Left cardiac atrium (tissue), 4 donors: ENCODE measurements at regions of chr9 and their contacts with region 1.

Region 1: DNA sequence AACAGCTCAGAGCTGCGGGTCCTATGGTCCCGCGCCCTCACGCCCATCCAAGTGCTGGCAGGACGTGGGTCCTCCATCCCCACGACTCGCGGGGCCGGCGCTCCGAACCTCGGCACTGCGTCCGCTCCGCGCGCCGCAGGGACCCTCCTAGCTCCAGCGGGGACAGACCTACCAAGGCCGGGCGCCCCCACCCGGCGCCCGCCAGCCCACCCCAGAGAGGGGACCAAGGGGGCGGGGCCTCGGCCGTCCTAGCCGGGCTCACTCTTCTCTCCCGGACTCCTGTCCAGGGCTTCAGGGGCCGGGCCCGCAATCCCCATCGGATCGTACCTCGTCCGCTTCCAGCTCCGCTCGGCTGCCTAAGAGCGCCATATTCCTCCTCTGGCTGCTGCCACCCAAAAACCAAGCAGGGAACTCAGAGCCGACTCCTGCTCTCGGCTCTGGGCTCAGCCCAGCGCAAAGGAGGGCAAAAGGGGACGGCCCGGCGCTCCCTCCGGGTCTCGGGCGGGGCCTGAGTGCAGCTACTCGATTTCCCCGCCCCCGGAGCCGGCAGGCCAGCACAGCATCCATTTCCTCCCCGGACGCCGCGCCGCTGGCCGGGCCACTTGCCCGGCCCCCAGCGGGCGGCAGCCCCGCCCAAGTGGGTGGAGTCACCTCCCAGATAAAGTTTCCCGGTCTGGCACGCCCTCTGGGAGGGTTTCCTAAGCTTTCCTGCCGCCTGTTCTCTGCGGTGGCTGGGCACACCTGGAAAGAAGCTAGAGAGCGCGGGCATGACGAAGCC is at the start of gene TTC39B:
- DNase-seq: peak; percentile 96
- ATAC-seq: peak; percentile 97 to 99
- total RNA-seq, gene TTC39B: 2.9 to 4.8 TPM

Region 2: DNA sequence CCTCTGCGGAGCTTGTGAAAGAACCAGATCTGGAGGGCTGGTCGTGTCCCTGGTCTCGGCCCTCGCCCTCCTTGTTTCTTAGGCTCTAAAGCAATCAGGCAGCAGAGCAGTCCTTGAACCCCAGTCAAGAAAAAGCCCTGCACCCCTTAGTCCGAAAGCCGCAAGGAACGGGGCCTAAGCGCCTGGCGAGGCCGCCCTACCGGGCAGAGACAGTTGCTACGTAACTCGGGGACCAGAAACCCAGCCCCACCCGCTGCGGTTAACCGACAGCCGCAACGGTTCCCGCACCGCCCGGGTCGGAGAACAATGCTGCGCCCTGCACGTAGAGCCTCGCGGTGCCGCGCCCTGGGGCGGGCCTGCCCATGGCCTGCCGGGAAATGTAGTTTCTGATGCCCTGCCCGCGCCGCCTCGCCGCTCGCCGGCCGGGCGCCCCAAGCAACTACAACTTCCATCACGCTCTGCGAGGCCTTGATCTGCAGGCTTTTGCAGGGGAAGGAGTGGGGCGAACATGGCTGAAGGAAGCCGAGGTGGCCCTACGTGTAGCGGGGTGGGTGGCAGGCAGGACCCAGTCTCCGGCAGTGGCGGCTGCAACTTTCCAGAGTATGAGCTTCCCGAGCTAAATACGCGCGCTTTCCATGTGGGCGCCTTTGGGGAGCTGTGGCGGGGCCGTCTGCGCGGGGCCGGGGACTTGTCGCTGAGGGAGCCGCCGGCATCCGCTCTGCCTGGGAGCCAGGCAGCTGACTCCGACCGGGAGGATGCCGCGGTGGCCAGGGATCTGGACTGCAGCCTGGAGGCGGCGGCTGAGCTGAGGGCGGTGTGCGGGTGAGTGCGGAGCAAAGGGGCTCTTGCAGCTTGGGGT is 115.7 kb after region 1 on chr9 and contains the start of gene SNAPC3:
- intact Hi-C with region 1: loop called in 1 of 2 experiments (anchors 5 kb)
- DNase-seq: peak; percentile 95
- ATAC-seq: peak; percentile 99 to 100
- total RNA-seq, gene SNAPC3: 22.6 to 23.6 TPM